Brain microvascular endothelial cell (primary cell): ENCODE measurements at regions of chr17 and their contacts with region 1.

Region 1: DNA sequence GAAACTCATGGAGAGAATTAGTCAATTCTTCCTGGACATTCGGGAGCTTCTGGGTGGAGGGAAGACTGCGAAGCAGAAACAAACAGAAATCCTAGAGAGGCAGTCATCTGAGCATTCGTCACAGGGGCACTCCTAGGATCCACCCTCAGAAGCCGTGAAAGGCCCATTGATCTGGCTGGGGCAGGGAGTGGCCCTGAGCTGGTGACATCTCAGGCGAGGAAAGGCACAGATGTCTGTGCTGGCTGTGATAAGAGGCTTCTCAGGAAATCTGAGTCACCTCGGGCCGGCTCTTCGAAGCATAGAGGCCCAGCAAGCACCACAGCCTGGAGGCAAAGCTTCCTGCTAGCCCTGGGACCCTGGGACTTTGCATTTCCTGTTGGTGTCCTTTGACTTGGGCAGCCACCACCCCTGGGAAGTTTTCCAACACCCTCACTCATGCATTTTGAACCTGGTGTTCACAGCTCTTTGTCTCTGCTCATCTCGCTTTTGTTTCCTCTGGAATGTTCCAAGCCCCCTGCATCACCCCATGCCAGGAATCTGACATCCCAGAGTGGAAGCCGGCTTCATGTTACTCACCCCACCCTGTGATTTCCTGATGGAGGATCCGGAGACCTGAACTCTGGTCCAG is 23.3 kb upstream of the CDRT4 start:
- DNase-seq: peak; percentile 73
- H3K4me3 ChIP-seq: no peak overlapping the region
- H3K27ac ChIP-seq: peak overlapping the region; percentile 70
- H3K27me3 ChIP-seq: no peaks in the 10 kb centered on the region
- CTCF ChIP-seq: no peak

Region 2: DNA sequence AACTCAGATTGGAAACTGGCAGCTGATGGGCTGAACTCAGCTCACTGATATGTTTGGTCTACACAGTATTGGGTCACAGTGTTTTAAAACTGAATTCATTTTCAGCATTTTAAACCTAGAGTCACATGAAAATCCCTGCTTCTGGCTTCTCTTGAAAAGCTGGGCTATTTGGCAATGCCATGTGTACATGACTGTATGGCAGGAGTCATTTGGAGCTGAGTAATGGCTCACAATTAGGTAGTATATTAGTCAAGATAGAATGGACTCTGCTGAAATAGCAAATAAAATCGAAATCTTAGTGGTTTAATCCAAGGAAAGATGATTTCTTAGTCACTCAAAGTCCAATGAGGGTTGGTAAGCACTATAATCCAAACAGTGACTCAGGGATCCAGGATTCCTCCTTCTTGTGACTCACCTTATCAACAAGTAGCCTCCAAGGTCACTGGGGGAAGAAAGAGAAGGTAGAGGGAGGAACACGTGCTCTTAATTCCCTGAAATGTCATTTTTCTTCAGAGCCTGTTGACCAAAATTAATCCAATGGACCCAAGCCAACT is 211.7 kb before region 1 on chr17:
- in situ Hi-C with region 1: loop called (anchors 25 kb)
- DNase-seq: peak; percentile 88
- H3K4me3 ChIP-seq: no peak overlapping the region
- H3K27ac ChIP-seq: peak overlapping the region; percentile 54
- H3K27me3 ChIP-seq: no peaks in the 10 kb centered on the region
- CTCF ChIP-seq: no peak

Region 3: DNA sequence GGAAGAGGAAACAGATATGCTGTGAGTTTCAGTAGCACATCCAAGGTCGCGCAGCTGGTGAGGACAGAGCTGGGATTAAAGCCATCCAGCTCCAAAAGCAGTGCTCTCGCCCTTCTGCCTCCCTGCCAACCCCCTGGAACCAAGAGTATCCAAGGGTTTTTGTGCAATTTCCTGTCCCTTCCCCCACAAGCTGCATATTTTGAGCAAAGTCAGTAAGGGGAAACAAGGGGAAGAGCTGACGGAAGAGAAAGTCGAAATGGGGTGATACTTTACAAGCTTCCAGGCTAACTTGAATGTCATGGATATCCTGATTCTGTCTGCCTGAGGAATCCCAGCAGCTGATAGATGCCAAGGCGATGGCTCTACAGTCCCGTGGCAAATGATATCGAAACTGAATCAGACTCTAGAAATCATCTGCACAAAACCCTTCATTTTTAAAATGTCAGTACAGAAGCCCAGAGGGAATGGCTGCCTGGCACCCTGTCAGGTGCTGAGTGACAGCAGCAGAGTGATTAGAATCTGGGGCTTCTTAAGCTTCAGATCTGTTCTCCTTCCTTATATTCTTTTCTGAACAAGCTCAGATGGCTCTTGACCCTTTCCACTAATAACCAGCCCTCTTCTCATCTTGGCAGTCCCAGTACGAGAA is 106.5 kb before region 1 on chr17:
- in situ Hi-C with region 1: no loop called
- DNase-seq: no peak
- H3K4me3 ChIP-seq: peak overlapping the region; percentile 1
- H3K27ac ChIP-seq: no peak overlapping the region
- H3K27me3 ChIP-seq: no peaks in the 10 kb centered on the region
- CTCF ChIP-seq: no peak

Region 4: GRCh38 chr17:15398736-15399331 is 91.9 kb before region 1 on chr17:
- in situ Hi-C with region 1: no loop called
- DNase-seq: peak; percentile 61
- H3K4me3 ChIP-seq: no peak overlapping the region
- H3K27ac ChIP-seq: no peak overlapping the region
- H3K27me3 ChIP-seq: no peaks in the 10 kb centered on the region
- CTCF ChIP-seq: no peak

Region 5: GRCh38 chr17:15422392-15422957 is 68.3 kb before region 1 on chr17:
- in situ Hi-C with region 1: no loop called
- DNase-seq: no peak
- H3K4me3 ChIP-seq: no peak overlapping the region
- H3K27ac ChIP-seq: no peak overlapping the region
- H3K27me3 ChIP-seq: no peaks in the 10 kb centered on the region
- CTCF ChIP-seq: no peak

Region 6: DNA sequence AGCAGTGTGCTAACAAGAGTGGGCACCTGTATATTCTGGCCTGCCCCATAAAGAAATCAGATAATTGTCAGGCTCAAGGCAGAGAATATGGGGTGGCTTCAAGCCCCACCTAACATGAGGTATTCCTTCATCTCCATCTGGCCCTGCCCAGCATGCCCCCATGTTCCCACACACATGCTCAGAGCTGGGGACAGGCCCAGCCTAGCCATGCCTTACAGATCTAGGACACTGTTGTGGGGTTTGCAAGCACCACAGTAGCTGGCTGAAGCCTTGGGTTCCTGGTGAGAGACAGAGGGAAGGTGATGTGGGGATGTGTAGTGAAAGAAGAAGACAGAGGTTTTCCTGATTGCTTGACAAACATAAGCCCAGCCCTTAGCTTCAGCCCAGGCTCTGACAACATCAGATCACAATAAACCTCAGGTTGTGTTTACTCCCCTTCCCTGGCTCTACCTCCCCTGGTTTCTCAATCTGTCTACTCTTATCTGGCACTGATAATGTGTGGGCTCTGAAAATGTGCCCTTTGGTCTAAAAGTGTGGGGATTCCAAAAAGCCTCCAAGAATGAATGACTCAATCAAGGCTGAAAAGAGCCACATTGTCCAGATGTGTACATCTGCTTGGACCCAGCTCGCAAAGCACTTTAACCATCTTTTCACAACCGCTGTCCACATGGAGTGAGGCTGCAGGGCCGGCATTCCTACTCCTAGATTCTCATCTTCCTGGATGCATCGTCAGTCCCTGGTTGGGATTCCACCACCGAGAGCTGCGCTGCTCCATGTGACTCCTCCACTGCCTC is 57.7 kb before region 1 on chr17:
- in situ Hi-C with region 1: no loop called
- DNase-seq: no peak
- H3K4me3 ChIP-seq: no peak overlapping the region
- H3K27ac ChIP-seq: no peak overlapping the region
- H3K27me3 ChIP-seq: no peaks in the 10 kb centered on the region
- CTCF ChIP-seq: no peak